Activated CD4-positive, alpha-beta T cell treated with anti-CD3 and anti-CD28 coated beads for 36 hours (primary cell): ENCODE measurements at regions of chr10 and their contacts with region 1.

Region 1: DNA sequence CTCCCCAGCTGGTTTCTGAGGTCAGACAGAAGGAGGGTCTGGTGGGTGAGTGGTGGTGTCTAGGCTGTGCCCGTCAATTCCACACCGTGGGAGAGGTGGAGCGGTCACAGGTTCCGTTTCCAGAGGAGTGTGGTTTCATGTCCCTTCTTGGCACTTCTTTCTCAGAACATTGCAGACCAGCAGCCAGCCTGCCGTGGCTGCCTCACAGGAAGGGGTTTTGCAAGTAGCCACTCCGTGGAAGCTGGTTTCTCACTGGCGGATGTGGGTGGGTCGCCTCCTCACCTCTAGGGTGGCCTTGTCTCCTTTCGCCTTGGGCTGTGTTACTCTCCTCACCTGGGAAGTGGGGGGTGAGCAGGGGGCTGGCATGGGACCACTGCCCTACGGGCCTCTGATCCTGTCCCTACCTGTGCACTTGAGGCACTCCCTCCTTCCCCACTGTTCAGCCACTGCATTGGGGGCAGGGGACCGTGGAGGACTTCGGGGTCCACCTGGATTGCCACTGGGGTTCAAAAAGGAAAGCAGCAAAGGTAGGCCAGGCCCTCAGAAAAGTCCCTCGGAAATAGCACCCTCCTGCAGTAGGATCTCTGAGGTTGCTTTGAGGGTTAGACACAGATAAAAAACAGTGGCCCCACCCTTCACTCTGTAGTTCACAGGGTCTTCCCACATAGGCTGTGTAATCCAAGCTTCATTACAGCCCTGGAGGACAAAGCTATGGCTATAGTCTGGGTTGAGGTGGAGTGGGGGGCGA is 33.9 kb downstream of the TSPAN14 start:
- DNase-seq: peak; percentile 73
- ATAC-seq: peak; percentile 34
- H3K4me3 Mint-ChIP-seq: peak overlapping the region; percentile 54
- H3K27ac Mint-ChIP-seq: peak overlapping the region; percentile 91
- H3K4me1 Mint-ChIP-seq: peaks cover 99% of the 10 kb centered on the region
- H3K27me3 Mint-ChIP-seq: no peaks in the 10 kb centered on the region

Region 2: GRCh38 chr10:80459047-80459931 is 28.7 kb before region 1 on chr10:
- CTCF ChIA-PET with region 1: interaction called, 16 read pairs
- POLR2A ChIA-PET with region 1: interaction called, 5 read pairs
- intact Hi-C with region 1: loop called (anchors 1 kb)
- DNase-seq: peak; percentile 84
- ATAC-seq: peak; percentile 52
- H3K4me3 Mint-ChIP-seq: peak overlapping the region; percentile 99
- H3K27ac Mint-ChIP-seq: peak overlapping the region; percentile 98
- H3K4me1 Mint-ChIP-seq: peaks cover 82% of the 10 kb centered on the region
- H3K27me3 Mint-ChIP-seq: no peaks in the 10 kb centered on the region

Region 3: DNA sequence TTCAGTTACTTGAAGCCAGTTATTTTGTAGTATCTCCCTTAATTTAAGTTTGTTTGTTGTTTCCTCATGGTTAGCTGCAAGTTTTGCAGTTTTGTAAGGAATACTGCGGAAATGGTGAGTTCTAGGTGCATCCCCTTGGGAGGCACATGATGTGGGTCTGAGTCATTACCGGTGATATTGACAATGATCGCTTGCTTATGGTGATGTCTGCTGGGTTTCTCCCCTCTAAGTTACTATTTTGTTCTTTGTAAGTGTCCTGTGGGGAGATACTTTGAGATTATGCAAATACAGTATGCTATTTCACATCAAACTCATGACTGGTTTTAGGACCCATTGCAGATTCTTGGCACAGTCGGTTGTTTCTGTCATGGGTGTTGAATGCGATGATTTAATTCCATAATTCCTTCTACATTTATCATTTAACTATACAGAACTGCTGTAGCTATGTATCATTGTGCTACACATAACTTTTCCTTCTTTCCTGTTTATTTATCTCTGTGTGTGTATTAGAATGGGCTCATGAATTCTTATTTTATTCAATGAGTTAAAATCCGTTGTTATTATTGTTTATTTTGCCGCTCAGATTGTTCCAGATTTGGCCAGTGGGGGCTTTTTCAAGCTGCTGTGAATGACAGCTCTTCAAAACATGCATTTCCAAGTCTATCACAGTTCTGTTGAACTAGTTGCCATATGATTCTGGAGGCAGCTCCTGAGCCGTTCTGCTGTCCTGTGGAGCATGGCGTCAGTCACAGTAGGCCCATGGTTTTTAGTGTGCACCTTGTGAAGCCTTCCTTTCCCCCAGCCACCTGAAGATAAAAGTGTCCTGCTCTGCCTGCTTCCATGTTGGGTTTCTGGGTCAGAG is 15.5 kb before region 1 on chr10:
- CTCF ChIA-PET with region 1: interaction called, 29 read pairs
- POLR2A ChIA-PET with region 1: interaction called, 9 read pairs
- intact Hi-C with region 1: loop called (anchors 1 kb)
- DNase-seq: peak; percentile 66
- ATAC-seq: peak; percentile 80
- H3K4me3 Mint-ChIP-seq: peak overlapping the region; percentile 61
- H3K27ac Mint-ChIP-seq: peak overlapping the region; percentile 91
- H3K4me1 Mint-ChIP-seq: peaks cover 93% of the 10 kb centered on the region
- H3K27me3 Mint-ChIP-seq: no peaks in the 10 kb centered on the region

Region 4: GRCh38 chr10:80498833-80499741 is 11.1 kb after region 1 on chr10:
- CTCF ChIA-PET with region 1: interaction called, 122 read pairs
- POLR2A ChIA-PET with region 1: interaction called, 18 read pairs
- intact Hi-C with region 1: loop called in 1 of 2 experiments (anchors 2 kb)
- DNase-seq: peak; percentile 88
- ATAC-seq: peak; percentile 85
- H3K4me3 Mint-ChIP-seq: peak overlapping the region; percentile 23
- H3K27ac Mint-ChIP-seq: peak overlapping the region; percentile 98
- H3K4me1 Mint-ChIP-seq: peaks cover 100% of the 10 kb centered on the region
- H3K27me3 Mint-ChIP-seq: no peaks in the 10 kb centered on the region